WTC11 (cell line): ENCODE measurements at regions of chr9 and their contacts with region 1.

Region 1: DNA sequence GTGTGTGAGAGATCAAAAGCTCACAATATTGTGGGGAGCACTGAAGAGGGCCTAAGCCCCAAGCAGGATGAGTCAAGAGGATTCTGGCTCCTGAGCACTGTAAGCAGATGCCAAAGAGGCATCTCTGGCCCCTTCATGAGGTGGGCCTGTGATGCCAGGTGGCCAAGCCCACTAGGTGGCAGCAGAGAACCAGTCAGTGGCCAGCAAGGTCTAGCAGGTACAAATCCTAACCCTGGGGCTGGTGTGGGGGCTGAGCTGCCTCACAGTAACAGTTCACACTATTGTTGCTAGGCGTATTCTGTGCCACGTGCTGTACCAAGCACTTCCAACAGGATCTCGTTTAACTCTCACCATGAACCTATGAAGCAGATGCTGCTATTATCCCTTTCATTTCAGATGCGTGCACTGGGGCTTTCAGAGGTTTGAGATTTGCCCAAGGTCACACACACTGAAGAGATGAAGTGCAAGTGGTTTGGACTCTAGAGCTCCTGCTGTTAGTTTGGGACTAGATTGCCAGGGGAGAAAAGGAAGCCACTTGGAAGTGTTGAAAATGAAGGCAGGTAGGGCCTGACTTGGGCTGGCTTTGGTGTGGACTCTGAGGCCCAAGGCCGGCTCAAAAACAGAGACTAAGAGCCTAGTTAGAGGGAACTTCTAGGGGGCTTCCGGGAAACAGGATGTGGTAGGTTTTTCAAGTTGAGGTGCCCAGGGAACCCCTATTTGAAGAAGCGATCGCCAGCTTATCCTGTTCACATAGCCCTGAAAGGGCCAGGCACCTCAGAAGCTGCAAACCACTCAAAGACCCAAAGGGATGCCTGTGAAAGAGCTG is 4.4 kb upstream of the MLANA start:
- DNase-seq: peak; percentile 92
- ATAC-seq: peak; percentile 98
- H3K4me3 Mint-ChIP-seq: no peak overlapping the region
- H3K27ac Mint-ChIP-seq: no peak overlapping the region
- H3K4me1 Mint-ChIP-seq: peaks cover 3% of the 10 kb centered on the region
- H3K27me3 Mint-ChIP-seq: no peaks in the 10 kb centered on the region; the same call in 1 of the 2 replicates
- CTCF ChIP-seq: peak; percentile 89

Region 2: GRCh38 chr9:5832543-5833529 is 53.5 kb before region 1 on chr9 and contains the start of gene ERMP1:
- CTCF ChIA-PET with region 1: interaction called, 17 read pairs
- POLR2A ChIA-PET with region 1: no interaction called
- DNase-seq: peak; percentile 90
- ATAC-seq: peak; percentile 87
- H3K4me3 Mint-ChIP-seq: peak within 1 kb of the TSS; percentile 86
- H3K27ac Mint-ChIP-seq: no peak within 1 kb of the TSS
- H3K4me1 Mint-ChIP-seq: peaks cover 28% of the 10 kb centered on the region
- H3K27me3 Mint-ChIP-seq: no peaks in the 10 kb centered on the region; the same call in 1 of the 2 replicates
- CTCF ChIP-seq: peak; percentile 73
- total RNA-seq, gene ERMP1: 25.4 to 28.8 TPM (median 28.8 TPM) in 3 replicates

Region 3: DNA sequence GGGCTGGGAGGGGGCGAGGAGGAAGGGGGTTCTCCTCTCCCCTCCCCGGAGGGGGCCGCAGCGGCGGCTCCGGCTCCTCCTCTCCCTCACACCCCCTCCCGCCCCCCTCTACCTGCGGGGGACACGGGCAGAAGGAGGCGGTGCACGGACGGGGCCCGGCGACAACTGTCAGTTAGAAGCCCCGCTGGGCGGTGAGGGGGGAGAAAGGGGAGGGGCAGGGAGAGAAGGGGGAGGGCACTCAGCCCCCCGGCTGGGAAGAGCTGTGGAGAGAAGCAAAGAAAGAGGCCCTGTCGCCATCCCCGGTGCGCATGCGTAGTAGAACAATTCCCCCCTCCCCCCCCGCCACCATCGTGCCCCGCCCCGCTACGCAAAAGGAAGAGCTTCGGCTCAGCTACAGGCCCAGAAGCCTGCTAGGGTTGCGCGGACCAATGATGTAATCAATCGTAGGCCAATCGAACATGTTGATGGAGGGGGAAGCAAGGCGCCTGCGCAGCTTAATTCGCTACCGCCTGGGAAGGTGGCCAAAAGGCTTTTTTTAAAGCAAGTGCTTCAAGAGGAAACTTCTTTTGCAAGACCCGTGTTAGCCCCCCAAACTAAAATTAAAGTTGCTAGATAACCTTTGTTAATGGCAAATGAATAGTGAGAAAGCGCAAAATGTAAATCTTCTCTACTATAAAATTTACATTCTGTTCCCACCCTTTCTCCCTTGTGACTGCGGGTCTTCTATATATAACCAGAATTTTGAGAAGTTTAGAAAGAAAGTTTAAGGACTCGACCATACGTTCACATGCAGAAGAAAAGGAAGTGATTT is 122.0 kb after region 1 on chr9:
- CTCF ChIA-PET with region 1: interaction called, 14 read pairs
- POLR2A ChIA-PET with region 1: no interaction called
- DNase-seq: peak; percentile 91
- ATAC-seq: peak; percentile 71
- H3K4me3 Mint-ChIP-seq: peak overlapping the region; percentile 68
- H3K27ac Mint-ChIP-seq: peak overlapping the region; percentile 94
- H3K4me1 Mint-ChIP-seq: peaks cover 29% of the 10 kb centered on the region
- H3K27me3 Mint-ChIP-seq: no peaks in the 10 kb centered on the region
- CTCF ChIP-seq: no peak

Region 4: GRCh38 chr9:6049798-6050197 is 163.5 kb after region 1 on chr9:
- CTCF ChIA-PET with region 1: interaction called, 64 read pairs
- POLR2A ChIA-PET with region 1: no interaction called
- DNase-seq: peak; percentile 31
- ATAC-seq: peak; percentile 69
- H3K4me3 Mint-ChIP-seq: no peak overlapping the region
- H3K27ac Mint-ChIP-seq: no peak overlapping the region
- H3K4me1 Mint-ChIP-seq: peaks cover 13% of the 10 kb centered on the region
- H3K27me3 Mint-ChIP-seq: no peaks in the 10 kb centered on the region
- CTCF ChIP-seq: peak; percentile 46; the same call in 1 of the 2 replicates

Region 5: DNA sequence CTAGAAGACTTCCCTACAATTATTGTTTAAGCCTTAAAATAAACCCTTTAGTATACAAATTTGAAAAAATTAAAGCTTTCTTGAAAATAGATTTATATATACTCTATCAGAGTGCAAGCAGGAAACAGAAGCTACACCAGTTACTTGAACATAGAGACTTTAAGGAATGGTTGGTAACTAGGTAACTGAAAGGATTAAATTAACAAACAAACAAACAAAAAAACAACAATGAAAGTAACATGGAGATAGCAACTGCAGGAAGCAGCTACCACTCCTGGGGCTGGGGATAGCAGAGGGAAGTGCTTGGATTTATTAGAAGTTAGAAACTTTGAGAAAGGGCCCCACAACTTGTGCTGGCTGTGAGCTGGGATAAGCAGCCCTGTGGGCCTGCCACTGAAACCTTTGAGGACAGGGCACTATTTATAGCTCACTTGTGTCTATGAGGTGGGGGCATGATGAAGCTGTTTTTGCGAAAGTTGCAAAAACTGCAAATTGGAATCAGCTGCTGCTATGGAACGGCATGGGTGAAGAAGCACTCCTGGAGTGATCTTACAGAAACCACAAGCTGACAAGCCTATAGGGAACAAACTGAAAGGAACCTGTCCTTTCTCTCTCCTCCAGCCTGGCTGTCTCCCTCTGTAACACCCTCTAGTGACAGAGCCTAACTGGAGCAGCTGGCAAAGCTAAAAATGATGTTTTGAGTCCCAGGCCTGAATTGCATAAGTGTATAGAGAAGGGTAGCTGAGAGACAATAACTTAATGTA is 220.4 kb after region 1 on chr9:
- CTCF ChIA-PET with region 1: interaction called, 11 read pairs
- POLR2A ChIA-PET with region 1: no interaction called
- DNase-seq: peak; percentile 21
- ATAC-seq: peak; percentile 97
- H3K4me3 Mint-ChIP-seq: no peak overlapping the region
- H3K27ac Mint-ChIP-seq: peak overlapping the region; percentile 58; the same call in 1 of the 2 replicates
- H3K4me1 Mint-ChIP-seq: peaks cover 11% of the 10 kb centered on the region
- H3K27me3 Mint-ChIP-seq: no peaks in the 10 kb centered on the region
- CTCF ChIP-seq: no peak

Region 6: GRCh38 chr9:6305954-6306563 is 419.7 kb after region 1 on chr9:
- CTCF ChIA-PET with region 1: interaction called, 12 read pairs
- POLR2A ChIA-PET with region 1: no interaction called
- DNase-seq: no peak
- ATAC-seq: no peak
- H3K4me3 Mint-ChIP-seq: no peak overlapping the region
- H3K27ac Mint-ChIP-seq: no peak overlapping the region
- H3K4me1 Mint-ChIP-seq: 0 out of 2 replicates have a peak, but pooled peaks cover 4% of the 10 kb centered on the region
- H3K27me3 Mint-ChIP-seq: no peaks in the 10 kb centered on the region; the same call in 1 of the 2 replicates
- CTCF ChIP-seq: 0 out of 2 replicates have a peak, but pooled peaks have one; percentile 14